IMR-90 (cell line): ENCODE measurements at regions of chr6 and their contacts with region 1.

Region 1: GRCh38 chr6:148166339-148166968 is 176.2 kb upstream of the SASH1 start:
- DNase-seq: peak; percentile 72
- ATAC-seq: peak; percentile 75
- H3K4me3 ChIP-seq: no peak overlapping the region
- H3K27ac ChIP-seq: no peak overlapping the region
- H3K4me1 ChIP-seq: no peaks in the 10 kb centered on the region
- H3K27me3 ChIP-seq: no peaks in the 10 kb centered on the region; the same call in 1 of the 2 replicates
- CTCF ChIP-seq: peak; percentile 71
- POLR2A ChIP-seq: no peak
- RAD21 ChIP-seq: peak; percentile 72

Region 2: GRCh38 chr6:147390909-147391536 is 775.4 kb before region 1 on chr6:
- CTCF ChIA-PET with region 1: no interaction called
- POLR2A ChIA-PET with region 1: no interaction called
- dilution Hi-C with region 1: no loop called
- in situ Hi-C with region 1: no loop called
- intact Hi-C with region 1: loop called (anchors 5 kb)
- DNase-seq: peak; percentile 39
- ATAC-seq: peak; percentile 54; the same call in 1 of the 2 replicates
- H3K4me3 ChIP-seq: no peak overlapping the region
- H3K27ac ChIP-seq: no peak overlapping the region
- H3K4me1 ChIP-seq: peaks cover 3% of the 10 kb centered on the region; the same call in 1 of the 2 replicates
- H3K27me3 ChIP-seq: no peaks in the 10 kb centered on the region
- CTCF ChIP-seq: peak; percentile 52
- POLR2A ChIP-seq: no peak
- RAD21 ChIP-seq: peak; percentile 57

Region 3: DNA sequence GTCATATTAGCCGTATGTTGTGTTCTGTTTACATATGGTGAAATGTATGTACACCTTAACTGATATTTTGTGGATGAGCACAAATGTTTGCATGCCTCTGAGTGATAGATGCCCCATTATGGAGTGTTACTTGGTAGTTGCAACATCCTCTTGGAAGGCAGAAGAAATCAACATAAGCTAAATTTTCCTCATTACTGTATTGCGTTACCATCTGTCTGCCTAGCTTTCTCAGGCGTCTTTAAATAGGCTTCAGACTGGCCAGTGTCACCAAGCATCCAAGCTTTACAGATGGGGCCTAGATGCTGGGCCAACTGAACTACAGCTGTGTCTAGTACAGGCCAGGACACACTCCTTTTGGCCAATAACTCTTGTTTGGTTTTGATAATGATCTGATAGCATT is 407.4 kb before region 1 on chr6:
- CTCF ChIA-PET with region 1: no interaction called
- POLR2A ChIA-PET with region 1: no interaction called
- dilution Hi-C with region 1: no loop called
- in situ Hi-C with region 1: no loop called
- intact Hi-C with region 1: loop called (anchors 10 kb)
- DNase-seq: peak; percentile 44
- ATAC-seq: peak; percentile 67
- H3K4me3 ChIP-seq: no peak overlapping the region
- H3K27ac ChIP-seq: no peak overlapping the region
- H3K4me1 ChIP-seq: peaks cover 5% of the 10 kb centered on the region
- H3K27me3 ChIP-seq: no peaks in the 10 kb centered on the region
- CTCF ChIP-seq: no peak
- POLR2A ChIP-seq: no peak
- RAD21 ChIP-seq: no peak

Region 4: GRCh38 chr6:148200293-148200692 is 33.8 kb after region 1 on chr6:
- CTCF ChIA-PET with region 1: no interaction called
- POLR2A ChIA-PET with region 1: no interaction called
- dilution Hi-C with region 1: no loop called
- in situ Hi-C with region 1: no loop called
- intact Hi-C with region 1: no loop called
- DNase-seq: no peak
- ATAC-seq: no peak
- H3K4me3 ChIP-seq: no peak overlapping the region
- H3K27ac ChIP-seq: no peak overlapping the region
- H3K4me1 ChIP-seq: peaks cover 9% of the 10 kb centered on the region
- H3K27me3 ChIP-seq: peaks cover 5% of the 10 kb centered on the region; the same call in 1 of the 2 replicates
- CTCF ChIP-seq: no peak
- POLR2A ChIP-seq: no peak
- RAD21 ChIP-seq: no peak